ENCODE measurements at regions of chr15 and their contacts with region 1.

Region 1: DNA sequence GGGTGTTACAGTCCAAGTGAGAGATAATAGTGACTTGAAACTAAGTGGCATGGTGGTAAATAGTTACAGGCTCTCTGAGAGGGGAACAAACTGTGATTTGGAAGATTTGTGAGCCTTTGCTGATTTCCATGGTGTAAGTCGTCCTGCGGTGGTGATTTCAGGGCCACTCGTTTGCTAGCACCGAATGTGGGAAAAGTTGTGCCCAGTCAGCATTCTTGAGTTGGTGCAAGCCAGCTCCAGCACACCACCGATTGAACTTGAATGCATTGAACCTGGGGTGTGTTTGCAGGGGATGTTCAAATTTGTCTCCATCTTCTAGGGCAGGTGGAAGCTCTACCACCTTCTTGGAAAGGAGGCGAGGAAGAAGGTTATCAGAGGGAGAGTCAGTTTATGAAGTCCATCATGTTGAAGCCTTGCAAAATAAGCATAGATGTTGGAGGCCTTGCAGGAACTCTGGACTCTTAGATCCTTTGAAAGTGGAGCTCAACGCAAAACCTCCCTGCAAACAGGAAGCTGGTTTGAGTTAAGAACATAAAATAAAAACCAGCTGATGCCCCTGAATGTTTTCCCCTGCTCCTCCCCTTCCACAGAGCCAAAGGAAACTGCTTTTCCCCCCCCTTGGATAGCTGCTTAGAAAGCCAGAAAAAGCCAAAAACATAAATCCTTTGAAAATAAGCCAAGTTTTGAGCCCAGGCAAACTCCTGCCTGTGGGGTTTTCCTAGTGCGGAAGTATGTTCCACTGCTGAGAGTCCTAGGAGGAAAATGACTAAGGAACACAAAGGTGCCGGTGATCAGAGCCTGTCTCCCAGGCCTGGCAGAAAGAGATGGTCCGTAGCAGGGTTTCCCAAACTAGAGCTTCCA is 21.9 kb downstream of the MAPKBP1 start:
- DNase-seq: no peak
- ATAC-seq: no peak
- H3K4me3 ChIP-seq: no peak overlapping the region
- H3K4me3 Mint-ChIP-seq: peak overlapping the region; percentile 30
- H3K27ac ChIP-seq: no peak overlapping the region
- H3K27ac Mint-ChIP-seq: no peak overlapping the region
- H3K4me1 ChIP-seq: peaks cover 7% of the 10 kb centered on the region
- H3K4me1 Mint-ChIP-seq: peaks cover 36% of the 10 kb centered on the region
- H3K27me3 ChIP-seq: no peaks in the 10 kb centered on the region
- H3K27me3 Mint-ChIP-seq: no peaks in the 10 kb centered on the region
- CTCF ChIP-seq: no peak

Region 2: GRCh38 chr15:41779662-41780157 is 16.5 kb before region 1 on chr15:
- CTCF ChIA-PET with region 1: interaction called, 5 read pairs
- POLR2A ChIA-PET with region 1: interaction called, 9 read pairs
- intact Hi-C with region 1: loop called in 1 of 2 experiments (anchors 2 kb)
- DNase-seq: no peak
- ATAC-seq: no peak
- H3K4me3 ChIP-seq: no peak overlapping the region
- H3K4me3 Mint-ChIP-seq: no peak overlapping the region
- H3K27ac ChIP-seq: no peak overlapping the region
- H3K27ac Mint-ChIP-seq: peak overlapping the region; percentile 50
- H3K4me1 ChIP-seq: peaks cover 38% of the 10 kb centered on the region
- H3K4me1 Mint-ChIP-seq: peaks cover 67% of the 10 kb centered on the region
- H3K27me3 ChIP-seq: no peaks in the 10 kb centered on the region
- H3K27me3 Mint-ChIP-seq: no peaks in the 10 kb centered on the region
- CTCF ChIP-seq: no peak

Region 3: GRCh38 chr15:42474827-42475226 is 678.6 kb after region 1 on chr15:
- CTCF ChIA-PET with region 1: no interaction called
- POLR2A ChIA-PET with region 1: no interaction called
- intact Hi-C with region 1: no loop called
- DNase-seq: no peak
- ATAC-seq: no peak
- H3K4me3 ChIP-seq: no peak overlapping the region
- H3K4me3 Mint-ChIP-seq: no peak overlapping the region
- H3K27ac ChIP-seq: no peak overlapping the region
- H3K27ac Mint-ChIP-seq: peak overlapping the region; percentile 39
- H3K4me1 ChIP-seq: no peaks in the 10 kb centered on the region
- H3K4me1 Mint-ChIP-seq: peaks cover 25% of the 10 kb centered on the region
- H3K27me3 ChIP-seq: no peaks in the 10 kb centered on the region
- H3K27me3 Mint-ChIP-seq: no peaks in the 10 kb centered on the region
- CTCF ChIP-seq: no peak

Measured in CD4-positive, alpha-beta T cell (primary cell).